ENCODE measurements at regions of chr1 and their contacts with region 1.

Region 1: DNA sequence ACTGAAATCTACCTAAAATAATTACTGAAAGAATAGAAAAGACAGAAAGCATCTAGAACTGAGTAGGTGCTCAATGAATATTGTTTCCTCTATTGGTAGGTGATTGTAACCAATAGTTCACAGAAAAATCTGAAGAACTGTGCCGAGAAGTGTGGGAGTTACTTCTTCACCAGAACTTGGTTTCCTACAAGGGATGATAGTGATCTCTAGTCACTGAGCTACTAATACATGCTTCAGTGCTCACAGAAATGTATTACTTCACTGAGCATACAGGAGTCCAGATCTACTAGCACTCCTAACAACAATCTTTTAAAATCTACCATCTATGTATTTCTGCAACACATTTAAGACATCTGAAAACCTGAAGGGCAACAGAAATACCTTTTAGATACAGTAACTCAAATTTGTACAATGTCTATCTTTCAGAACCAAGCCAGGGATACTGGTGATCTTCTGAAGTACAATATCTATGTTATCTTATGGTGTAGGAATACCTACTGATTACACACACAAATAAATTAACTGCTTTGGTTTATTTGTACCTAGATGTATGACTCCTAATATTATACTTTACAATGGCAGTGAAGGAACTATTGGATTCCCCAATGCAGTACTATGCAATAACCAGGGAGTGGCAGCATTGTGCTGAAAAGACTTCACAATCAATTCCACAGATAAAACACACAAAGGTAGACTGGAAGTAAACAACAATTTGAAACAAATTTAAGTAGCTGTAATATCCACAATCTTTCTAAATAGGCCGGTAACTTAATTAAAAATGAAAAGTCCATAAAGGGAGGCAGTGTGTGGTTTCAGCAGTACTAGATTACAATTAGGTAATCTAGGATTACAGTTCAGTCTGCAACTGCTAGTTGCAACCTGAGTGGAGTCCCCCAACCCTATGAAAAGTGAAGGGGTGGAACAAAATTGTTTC is 243.0 kb downstream of the SLC45A1 start:
- DNase-seq: peak; percentile 2
- H3K4me3 Mint-ChIP-seq: no peak overlapping the region
- H3K27ac Mint-ChIP-seq: no peak overlapping the region
- H3K4me1 Mint-ChIP-seq: peaks cover 14% of the 10 kb centered on the region
- H3K27me3 Mint-ChIP-seq: no peaks in the 10 kb centered on the region
- CTCF ChIP-seq: peak; percentile 31

Region 2: GRCh38 chr1:8671306-8671917 is 110.5 kb after region 1 on chr1:
- CTCF ChIA-PET with region 1: interaction called, 6 read pairs
- intact Hi-C with region 1: loop called (anchors 2 kb)
- DNase-seq: peak; percentile 28
- H3K4me3 Mint-ChIP-seq: no peak overlapping the region
- H3K27ac Mint-ChIP-seq: no peak overlapping the region
- H3K4me1 Mint-ChIP-seq: peaks cover 36% of the 10 kb centered on the region
- H3K27me3 Mint-ChIP-seq: no peaks in the 10 kb centered on the region
- CTCF ChIP-seq: peak; percentile 61

Region 3: GRCh38 chr1:8727809-8728213 is 166.9 kb after region 1 on chr1:
- CTCF ChIA-PET with region 1: interaction called, 4 read pairs
- intact Hi-C with region 1: loop called (anchors 1 kb)
- DNase-seq: no peak
- H3K4me3 Mint-ChIP-seq: no peak overlapping the region
- H3K27ac Mint-ChIP-seq: no peak overlapping the region
- H3K4me1 Mint-ChIP-seq: peaks cover 5% of the 10 kb centered on the region
- H3K27me3 Mint-ChIP-seq: no peaks in the 10 kb centered on the region
- CTCF ChIP-seq: no peak

Region 4: DNA sequence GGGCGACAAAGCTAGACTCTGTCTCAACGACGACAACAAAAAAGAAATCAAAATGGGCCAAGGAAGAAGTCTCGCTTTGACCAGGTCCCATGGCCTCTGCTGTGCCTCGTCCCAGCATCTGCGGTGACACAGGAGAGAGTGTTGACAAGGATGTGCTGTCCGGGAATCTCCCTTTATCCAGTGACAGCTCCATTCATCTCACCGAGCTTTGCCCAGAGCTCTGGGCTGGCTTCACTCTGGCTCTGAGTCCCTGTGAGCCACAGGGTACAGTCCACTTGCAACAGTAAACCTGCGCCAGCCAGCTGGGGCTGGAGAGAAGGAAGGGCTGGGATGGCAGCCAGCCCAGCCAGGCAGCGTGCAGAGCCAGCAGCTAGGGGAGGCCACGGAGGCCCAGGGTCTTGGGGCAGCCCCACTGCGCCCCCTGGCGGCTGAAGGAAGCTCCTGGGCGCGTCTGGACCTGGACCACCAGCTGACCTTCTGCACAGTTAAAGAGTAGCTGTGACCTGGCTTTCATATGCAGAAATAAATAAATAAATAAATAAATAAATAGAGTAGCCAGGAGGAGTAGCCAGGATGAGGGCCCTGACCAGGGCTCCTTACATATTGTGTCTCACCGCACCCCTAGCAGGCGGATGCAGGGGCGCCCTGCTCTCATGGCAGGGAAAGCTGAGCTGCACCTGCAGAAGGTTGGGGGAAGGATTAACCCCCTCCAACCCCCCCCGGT is 287.9 kb after region 1 on chr1:
- CTCF ChIA-PET with region 1: interaction called, 3 read pairs
- intact Hi-C with region 1: loop called (anchors 1 kb)
- DNase-seq: peak; percentile 88
- H3K4me3 Mint-ChIP-seq: no peak overlapping the region
- H3K27ac Mint-ChIP-seq: no peak overlapping the region
- H3K4me1 Mint-ChIP-seq: peaks cover 6% of the 10 kb centered on the region
- H3K27me3 Mint-ChIP-seq: no peaks in the 10 kb centered on the region
- CTCF ChIP-seq: peak; percentile 81

Region 5: DNA sequence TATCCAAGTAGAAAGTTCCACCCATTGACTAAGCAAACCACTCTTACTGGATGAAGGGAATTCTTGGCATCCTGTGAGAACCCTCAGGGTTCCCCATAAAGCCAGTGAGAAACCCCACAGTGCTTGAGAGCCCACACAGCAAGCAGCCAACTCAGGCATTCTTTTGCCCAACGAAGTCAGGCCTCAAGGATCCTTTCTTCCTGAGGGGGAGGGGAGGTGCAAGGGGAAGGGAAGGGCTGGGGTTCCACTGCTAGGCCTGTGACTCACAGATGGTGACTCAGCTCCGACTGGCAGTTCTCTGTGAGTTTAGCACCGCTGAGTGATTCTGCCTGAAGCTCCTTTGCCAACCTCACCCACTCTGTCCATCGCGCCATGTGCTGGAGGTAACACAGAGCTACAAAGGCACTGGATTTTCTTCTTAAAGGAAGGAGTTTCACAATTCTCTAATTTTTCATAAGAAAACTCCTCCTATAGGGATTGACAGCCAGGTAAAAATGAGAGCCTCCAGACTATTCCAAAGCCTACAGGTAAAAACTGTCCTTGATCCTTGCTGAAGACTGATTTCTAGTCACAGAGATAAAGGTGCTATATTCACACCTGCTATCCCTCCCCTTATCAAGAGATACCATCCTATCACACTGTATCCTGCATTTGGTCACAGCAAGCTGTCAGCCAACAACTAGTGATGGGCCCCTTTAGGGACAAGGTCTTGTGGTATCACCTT is 312.8 kb after region 1 on chr1:
- CTCF ChIA-PET with region 1: no interaction called
- intact Hi-C with region 1: no loop called
- DNase-seq: peak; percentile 86
- H3K4me3 Mint-ChIP-seq: peak overlapping the region; percentile 46
- H3K27ac Mint-ChIP-seq: peak overlapping the region; percentile 70
- H3K4me1 Mint-ChIP-seq: peaks cover 33% of the 10 kb centered on the region
- H3K27me3 Mint-ChIP-seq: no peaks in the 10 kb centered on the region
- CTCF ChIP-seq: no peak

Measured in Calu3 (cell line).